ENCODE measurements at regions of chr19 and their contacts with region 1.

Region 1: DNA sequence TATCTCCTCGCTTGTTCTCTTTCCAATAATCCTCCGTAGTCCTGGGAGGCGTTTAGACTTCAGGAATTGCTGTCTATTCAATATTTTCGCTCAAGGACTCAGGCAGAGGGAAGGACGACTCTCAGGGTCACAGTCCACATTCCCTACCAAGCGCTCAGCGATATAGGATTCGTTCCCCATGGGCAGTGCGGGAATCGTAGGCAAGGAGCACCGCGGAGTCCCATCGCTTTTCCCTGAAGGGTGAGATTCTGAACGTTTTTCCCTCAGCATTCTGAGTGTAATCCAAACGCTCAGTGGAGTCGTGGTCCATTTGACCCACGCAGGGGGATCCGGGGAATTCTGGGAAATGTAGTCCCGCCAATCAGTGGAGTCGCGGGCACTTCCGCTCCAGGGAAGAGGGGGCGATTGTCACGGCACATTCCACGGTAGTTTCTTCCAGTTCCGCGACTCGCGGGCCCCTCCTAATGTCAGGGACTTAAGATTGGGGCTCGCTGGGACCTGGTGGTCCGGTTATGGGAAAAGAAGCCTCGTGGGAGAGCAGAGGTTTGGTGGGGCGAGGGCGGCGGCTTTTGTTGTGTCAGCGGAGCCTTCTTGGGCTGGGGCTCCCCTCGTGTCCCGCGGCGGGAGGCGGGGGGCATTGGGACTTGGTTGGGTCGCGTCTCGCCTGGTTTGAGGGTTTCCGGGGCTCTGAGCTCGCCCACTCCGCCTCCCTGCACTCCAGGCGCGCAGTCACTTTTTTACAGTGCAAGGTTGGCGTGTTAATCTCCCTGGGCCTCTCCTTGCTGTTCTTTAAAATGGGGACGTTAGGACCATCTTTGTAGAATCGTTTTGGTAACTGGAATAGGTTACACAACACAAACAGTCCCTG is at the start of gene ZNF234:
- DNase-seq: peak; percentile 91
- H3K4me3 ChIP-seq: peak within 1 kb of the TSS; percentile 63
- H3K27ac ChIP-seq: peak within 1 kb of the TSS; percentile 68
- H3K4me1 ChIP-seq: no peaks in the 10 kb centered on the region
- H3K27me3 ChIP-seq: no peaks in the 10 kb centered on the region
- CTCF ChIP-seq: peak; percentile 32; the same call in 1 of the 2 replicates
- total RNA-seq, gene ZNF234: 15.1 and 17.1 TPM in 2 replicates

Region 2: GRCh38 chr19:44164673-44165512 is 23.5 kb after region 1 on chr19 and contains the start of gene ZNF226:
- CTCF ChIA-PET with region 1: no interaction called
- POLR2A ChIA-PET with region 1: no interaction called
- intact Hi-C with region 1: loop called (anchors 1 kb)
- DNase-seq: peak; percentile 98
- H3K4me3 ChIP-seq: peak within 1 kb of the TSS; percentile 60
- H3K27ac ChIP-seq: peak within 1 kb of the TSS; percentile 55
- H3K4me1 ChIP-seq: peaks cover 3% of the 10 kb centered on the region
- H3K27me3 ChIP-seq: no peaks in the 10 kb centered on the region
- CTCF ChIP-seq: no peak
- total RNA-seq, gene ZNF226: 21.4 and 23.1 TPM in 2 replicates